ENCODE measurements at regions of chr15 and their contacts with region 1.

Region 1: GRCh38 chr15:98647774-98648653 is at the start of gene IGF1R:
- DNase-seq: peak; percentile 94
- H3K4me3 ChIP-seq: peak within 1 kb of the TSS; percentile 84
- H3K27ac ChIP-seq: peak within 1 kb of the TSS; percentile 71
- H3K4me1 ChIP-seq: peaks cover 27% of the 10 kb centered on the region
- CTCF ChIP-seq: 0 out of 2 replicates have a peak, but pooled peaks have one; percentile 6
- total RNA-seq, gene IGF1R: 26.5 and 27.6 TPM in 2 replicates

Region 2: DNA sequence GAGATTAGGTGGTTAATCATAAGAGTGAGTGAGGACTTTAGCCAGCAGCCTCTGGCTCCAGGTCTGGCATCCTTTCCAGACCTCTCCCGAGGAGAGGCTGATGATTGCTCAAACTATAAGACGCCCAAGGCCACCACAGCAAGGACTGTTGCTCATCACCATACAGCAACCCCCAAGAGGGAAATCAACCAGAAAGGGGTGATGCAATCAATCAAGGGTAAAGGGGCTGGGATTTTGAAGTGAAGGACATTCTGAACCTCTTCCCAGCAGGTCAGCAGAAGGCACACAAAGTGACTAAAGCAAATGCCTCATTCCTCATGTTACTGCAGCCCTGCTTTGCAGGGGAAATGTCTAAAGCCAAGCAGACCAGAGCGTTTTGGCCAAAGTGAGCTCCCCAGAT is 247.0 kb before region 1 on chr15:
- CTCF ChIA-PET with region 1: no interaction called
- POLR2A ChIA-PET with region 1: no interaction called
- intact Hi-C with region 1: no loop called
- DNase-seq: no peak
- H3K4me3 ChIP-seq: no peak overlapping the region
- H3K27ac ChIP-seq: no peak overlapping the region
- H3K4me1 ChIP-seq: no peaks in the 10 kb centered on the region
- CTCF ChIP-seq: no peak

Region 3: GRCh38 chr15:98599909-98600691 is 47.9 kb before region 1 on chr15:
- CTCF ChIA-PET with region 1: no interaction called
- POLR2A ChIA-PET with region 1: interaction called, 3 read pairs
- intact Hi-C with region 1: loop called (anchors 1 kb)
- DNase-seq: peak; percentile 26
- H3K4me3 ChIP-seq: peak overlapping the region; percentile 42
- H3K27ac ChIP-seq: no peak overlapping the region
- H3K4me1 ChIP-seq: peaks cover 4% of the 10 kb centered on the region
- CTCF ChIP-seq: no peak

Region 4: DNA sequence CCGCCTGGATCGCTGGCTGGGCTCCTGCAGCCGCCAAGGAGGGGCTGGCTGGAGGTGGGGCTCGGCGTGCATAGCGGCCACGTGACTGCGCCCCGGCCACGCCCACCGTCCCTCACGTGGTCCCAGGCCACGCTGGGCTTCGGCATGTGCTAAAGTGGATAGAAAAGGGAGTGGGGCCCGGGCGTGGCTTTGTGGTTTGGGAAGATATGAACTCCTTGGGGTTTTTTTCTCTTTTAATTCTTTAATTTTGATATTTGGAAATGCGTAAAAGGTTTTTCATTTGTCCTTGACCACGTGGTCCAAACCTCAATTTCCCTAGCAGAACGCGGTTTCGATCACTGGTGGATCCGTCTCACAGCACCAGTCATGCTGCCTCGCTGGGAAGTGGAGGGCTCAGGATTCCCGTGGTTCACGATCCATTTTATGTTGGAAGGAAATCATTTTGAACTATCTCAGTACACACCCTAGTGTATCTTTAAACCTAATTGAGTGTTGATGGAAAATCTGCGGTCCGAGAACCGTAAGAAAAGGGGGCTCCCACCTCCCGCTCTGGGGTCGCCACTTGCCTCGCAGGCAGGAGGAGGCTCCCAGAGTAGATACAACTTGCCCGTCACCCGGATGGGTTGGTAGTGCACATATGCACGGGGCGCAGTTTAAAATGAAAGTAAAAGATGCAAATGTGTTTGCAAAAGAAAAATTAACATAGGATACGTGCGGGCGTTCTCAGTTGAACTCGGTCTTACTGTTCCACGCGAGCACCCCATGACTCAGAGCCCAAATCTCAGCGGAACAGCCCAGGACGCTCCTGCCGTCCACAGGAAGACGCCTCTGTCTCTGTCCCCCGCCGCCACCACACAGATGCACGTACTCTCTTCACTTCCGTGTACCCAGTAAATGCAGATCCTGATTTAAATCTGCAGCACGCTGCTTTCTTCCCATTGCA is 217.7 kb after region 1 on chr15:
- CTCF ChIA-PET with region 1: no interaction called
- POLR2A ChIA-PET with region 1: interaction called, 6 read pairs
- intact Hi-C with region 1: loop called (anchors 5 kb)
- DNase-seq: peak; percentile 82
- H3K4me3 ChIP-seq: peak overlapping the region; percentile 66
- H3K27ac ChIP-seq: peak overlapping the region; percentile 78
- H3K4me1 ChIP-seq: peaks cover 4% of the 10 kb centered on the region
- CTCF ChIP-seq: no peak

Region 5: DNA sequence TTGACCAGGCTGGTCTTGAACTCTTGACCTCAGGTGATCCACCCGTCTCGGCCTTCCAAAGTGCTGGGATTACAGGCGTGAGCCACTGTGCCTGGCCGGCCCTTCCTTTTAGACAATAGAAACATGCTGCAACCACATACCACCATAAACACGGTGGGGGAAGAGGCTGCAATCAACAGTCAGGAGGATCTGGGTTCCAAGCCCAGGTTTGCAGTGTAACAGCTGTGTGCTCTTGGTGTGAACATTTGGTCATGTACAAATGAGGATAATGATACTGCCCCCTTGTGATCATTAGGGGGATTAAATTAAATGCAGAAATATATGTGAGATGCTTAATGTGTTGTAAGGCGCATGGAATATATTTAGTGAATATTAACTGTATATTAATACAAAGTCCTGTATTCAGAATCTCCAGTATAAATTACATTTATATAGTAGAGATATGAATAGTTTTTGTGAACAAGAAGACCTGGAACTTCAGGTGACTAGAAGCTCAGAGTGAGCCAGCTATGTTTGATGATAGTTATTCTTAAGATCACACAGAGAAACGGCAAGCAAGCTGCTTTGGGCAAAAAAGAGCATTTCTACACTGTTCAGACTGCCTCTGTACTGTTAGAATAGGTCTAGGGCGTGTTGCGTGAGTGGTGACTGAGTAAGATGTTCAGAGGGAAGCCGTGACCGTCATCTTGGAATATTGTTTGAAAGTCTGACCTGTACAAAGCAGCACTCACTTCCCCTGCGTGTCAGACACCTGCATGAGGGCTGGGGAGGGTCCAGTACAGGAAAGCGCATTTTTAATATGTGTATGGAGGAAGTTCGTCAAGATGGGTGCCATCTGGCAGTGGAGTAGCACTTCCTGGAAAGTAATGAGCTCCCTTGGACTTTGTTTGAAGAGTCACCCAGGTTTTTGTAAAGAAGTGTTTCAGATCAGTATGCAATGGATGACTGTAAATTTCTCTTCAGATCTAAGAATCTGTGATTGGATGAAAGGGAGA is 233.8 kb after region 1 on chr15:
- CTCF ChIA-PET with region 1: no interaction called
- POLR2A ChIA-PET with region 1: no interaction called
- intact Hi-C with region 1: no loop called
- DNase-seq: peak; percentile 53
- H3K4me3 ChIP-seq: no peak overlapping the region
- H3K27ac ChIP-seq: no peak overlapping the region
- H3K4me1 ChIP-seq: peaks cover 9% of the 10 kb centered on the region
- CTCF ChIP-seq: peak; percentile 83

Region 6: DNA sequence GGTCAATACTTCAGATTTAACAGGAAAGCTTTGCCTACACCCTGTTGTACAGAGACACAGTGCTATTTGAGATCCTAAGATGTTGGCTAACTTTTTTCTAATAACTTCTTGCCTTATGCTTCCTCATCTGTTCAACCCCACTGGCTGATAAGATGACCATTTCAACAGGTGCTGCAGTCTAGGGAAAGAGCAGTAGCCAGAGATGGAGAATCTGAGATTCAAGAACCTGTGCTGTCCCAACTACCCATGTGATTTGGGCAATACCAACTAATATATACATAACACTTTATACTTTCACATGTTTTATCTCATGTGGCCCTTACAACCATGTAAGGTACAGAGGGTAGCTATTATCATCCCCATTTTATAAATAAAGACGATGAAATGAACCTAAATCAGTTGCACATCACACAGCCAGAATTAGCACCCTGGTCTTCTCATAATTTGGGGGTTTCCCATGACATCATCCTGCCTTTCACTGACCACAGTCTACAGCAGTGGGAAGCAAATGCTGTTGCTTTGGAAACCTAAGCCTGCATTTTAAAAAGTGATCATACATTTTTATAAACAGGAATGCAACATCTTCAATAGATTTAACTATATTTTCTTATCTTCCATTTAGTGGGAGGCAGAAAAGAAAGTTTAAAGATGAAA is 591.7 kb after region 1 on chr15:
- CTCF ChIA-PET with region 1: no interaction called
- POLR2A ChIA-PET with region 1: no interaction called
- intact Hi-C with region 1: loop called (anchors 10 kb)
- DNase-seq: no peak
- H3K4me3 ChIP-seq: no peak overlapping the region
- H3K27ac ChIP-seq: no peak overlapping the region
- H3K4me1 ChIP-seq: peaks cover 6% of the 10 kb centered on the region
- CTCF ChIP-seq: no peak

Measured in OCI-LY7 (cell line).